CD8-positive, alpha-beta memory T cell (primary cell): ENCODE measurements at regions of chr20 and their contacts with region 1.

Region 1: GRCh38 chr20:64038565-64039292 is 2.7 kb downstream of the C20orf204 start:
- DNase-seq: peak; percentile 63 to 82 (median 66)
- H3K4me3 ChIP-seq: peak overlapping the region; percentile 49
- H3K4me3 Mint-ChIP-seq: peak overlapping the region; percentile 48 to 82 (median 59)
- H3K27ac ChIP-seq: no peak overlapping the region
- H3K27ac Mint-ChIP-seq: peak overlapping the region in 1 of 8 donors; percentile 84
- H3K4me1 ChIP-seq: peaks cover 64% of the 10 kb centered on the region
- H3K4me1 Mint-ChIP-seq: peaks cover 24 to 78% (median 33%) of the 10 kb centered on the region in 3 donors
- H3K27me3 ChIP-seq: no peaks in the 10 kb centered on the region
- H3K27me3 Mint-ChIP-seq: peaks cover 0 to 6% of the 10 kb centered on the region in 2 donors

Region 2: DNA sequence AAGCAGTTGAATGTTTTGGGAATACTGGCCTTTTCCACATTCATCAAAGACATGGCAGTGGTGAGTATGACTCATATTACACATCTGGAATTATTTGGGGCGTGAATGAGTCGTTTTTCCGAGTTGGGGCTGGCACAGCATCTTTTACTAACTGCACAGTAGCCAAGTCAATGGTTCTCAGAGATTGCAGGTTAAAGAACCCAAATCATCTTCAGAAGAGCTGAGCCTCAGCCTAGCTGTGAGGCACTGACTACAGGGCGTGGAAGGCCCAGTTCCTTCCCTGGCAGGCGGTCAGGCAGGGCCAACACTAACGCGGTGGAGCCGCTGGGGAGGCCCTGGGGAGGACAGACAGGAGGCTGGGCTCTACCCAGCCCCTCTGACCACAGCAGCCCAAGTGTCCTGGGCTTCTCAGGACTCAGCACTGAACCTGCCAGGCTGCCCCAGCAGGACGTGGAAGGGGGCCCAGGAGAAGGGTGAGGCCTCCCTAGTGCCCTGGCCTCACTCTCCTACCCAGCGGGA is 444.6 kb before region 1 on chr20:
- CTCF ChIA-PET with region 1: no interaction called
- POLR2A ChIA-PET with region 1: no interaction called
- DNase-seq: no peak
- H3K4me3 ChIP-seq: no peak overlapping the region
- H3K4me3 Mint-ChIP-seq: no peak overlapping the region
- H3K27ac ChIP-seq: no peak overlapping the region
- H3K27ac Mint-ChIP-seq: no peak overlapping the region
- H3K4me1 ChIP-seq: no peaks in the 10 kb centered on the region
- H3K4me1 Mint-ChIP-seq: no peaks in the 10 kb centered on the region
- H3K27me3 ChIP-seq: no peaks in the 10 kb centered on the region
- H3K27me3 Mint-ChIP-seq: no peaks in the 10 kb centered on the region

Region 3: GRCh38 chr20:63980806-63981728 is 57.7 kb before region 1 on chr20 and contains the start of gene PRPF6:
- CTCF ChIA-PET with region 1: interaction called, 57 read pairs
- POLR2A ChIA-PET with region 1: interaction called, 15 read pairs
- DNase-seq: peak; percentile 92 to 96 (median 93)
- H3K4me3 ChIP-seq: peak within 1 kb of the TSS; percentile 93
- H3K4me3 Mint-ChIP-seq: peak within 1 kb of the TSS; percentile 89 to 95 (median 92)
- H3K27ac ChIP-seq: peak within 1 kb of the TSS; percentile 90
- H3K27ac Mint-ChIP-seq: peak within 1 kb of the TSS; percentile 93 to 99 (median 96)
- H3K4me1 ChIP-seq: peaks cover 54% of the 10 kb centered on the region
- H3K4me1 Mint-ChIP-seq: peaks cover 58 to 71% (median 68%) of the 10 kb centered on the region in 3 donors
- H3K27me3 ChIP-seq: no peaks in the 10 kb centered on the region
- H3K27me3 Mint-ChIP-seq: no peaks in the 10 kb centered on the region
- total RNA-seq, gene PRPF6: 76.2 to 78.3 TPM

Region 4: GRCh38 chr20:64009811-64010387 is 28.8 kb before region 1 on chr20:
- CTCF ChIA-PET with region 1: interaction called, 11 read pairs
- POLR2A ChIA-PET with region 1: no interaction called
- DNase-seq: no peak
- H3K4me3 ChIP-seq: no peak overlapping the region
- H3K4me3 Mint-ChIP-seq: peak overlapping the region in 3 of 7 donors; percentile 7 to 19 (median 12)
- H3K27ac ChIP-seq: no peak overlapping the region
- H3K27ac Mint-ChIP-seq: peak overlapping the region in 3 of 8 donors; percentile 8 to 92 (median 66)
- H3K4me1 ChIP-seq: peaks cover 39% of the 10 kb centered on the region
- H3K4me1 Mint-ChIP-seq: peaks cover 25 to 47% (median 40%) of the 10 kb centered on the region in 3 donors
- H3K27me3 ChIP-seq: no peaks in the 10 kb centered on the region
- H3K27me3 Mint-ChIP-seq: no peaks in the 10 kb centered on the region

Region 5: DNA sequence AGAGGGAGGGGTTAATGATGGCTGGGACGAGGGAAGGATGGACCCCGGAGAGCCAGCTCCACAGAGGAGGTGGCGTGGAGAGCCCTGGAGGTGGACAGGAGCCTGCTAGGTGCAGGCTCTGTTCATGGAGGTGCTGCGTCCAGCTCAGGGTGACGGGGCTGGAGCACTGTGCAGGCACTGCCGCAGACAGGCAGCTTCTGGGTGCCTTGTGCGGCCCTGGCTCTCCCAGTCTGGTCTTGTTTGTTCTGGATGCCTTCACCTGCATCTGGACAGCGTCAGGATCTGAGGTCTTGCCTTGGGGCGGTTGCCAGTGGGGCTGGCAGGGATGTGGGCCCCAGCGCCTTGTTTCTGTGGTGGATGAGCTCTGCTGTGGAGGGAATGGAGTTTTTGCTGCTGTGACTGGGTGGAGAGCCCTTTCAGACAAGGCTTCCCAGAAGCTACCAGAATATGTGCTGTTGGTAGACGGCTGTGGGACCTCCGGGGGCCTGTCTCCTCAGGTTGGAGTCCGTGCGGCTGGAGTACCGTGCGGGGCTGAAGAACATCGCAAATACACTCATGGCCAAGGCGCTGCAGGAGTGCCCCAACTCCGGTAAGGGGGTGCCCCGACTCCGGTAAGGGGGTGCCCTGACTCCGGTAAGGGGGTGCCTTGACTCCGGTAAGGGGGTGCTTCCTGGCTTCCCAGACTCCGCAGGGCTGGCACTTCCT is 10.6 kb before region 1 on chr20:
- CTCF ChIA-PET with region 1: interaction called, 19 read pairs
- POLR2A ChIA-PET with region 1: interaction called, 4 read pairs
- DNase-seq: no peak
- H3K4me3 ChIP-seq: no peak overlapping the region
- H3K4me3 Mint-ChIP-seq: no peak overlapping the region
- H3K27ac ChIP-seq: no peak overlapping the region
- H3K27ac Mint-ChIP-seq: peak overlapping the region in 1 of 8 donors; percentile 17
- H3K4me1 ChIP-seq: no peaks in the 10 kb centered on the region
- H3K4me1 Mint-ChIP-seq: no peaks in the 10 kb centered on the region
- H3K27me3 ChIP-seq: no peaks in the 10 kb centered on the region
- H3K27me3 Mint-ChIP-seq: no peaks in the 10 kb centered on the region

Region 6: GRCh38 chr20:64062596-64063388 is 24.1 kb after region 1 on chr20 and contains the start of gene TCEA2:
- CTCF ChIA-PET with region 1: interaction called, 33 read pairs
- POLR2A ChIA-PET with region 1: no interaction called
- DNase-seq: peak; percentile 85 to 94 (median 87)
- H3K4me3 ChIP-seq: peak within 1 kb of the TSS; percentile 50
- H3K4me3 Mint-ChIP-seq: peak within 1 kb of the TSS; percentile 82 to 89 (median 86)
- H3K27ac ChIP-seq: peak within 1 kb of the TSS; percentile 51
- H3K27ac Mint-ChIP-seq: peak within 1 kb of the TSS in 7 of 8 donors; percentile 49 to 92 (median 68)
- H3K4me1 ChIP-seq: peaks cover 45% of the 10 kb centered on the region
- H3K4me1 Mint-ChIP-seq: peaks cover 24 to 53% (median 28%) of the 10 kb centered on the region in 3 donors
- H3K27me3 ChIP-seq: no peaks in the 10 kb centered on the region
- H3K27me3 Mint-ChIP-seq: no peaks in the 10 kb centered on the region
- total RNA-seq, gene TCEA2: 24.2 to 24.5 TPM

Region 7: GRCh38 chr20:64079273-64080012 is 40.7 kb after region 1 on chr20 and contains the start of gene RGS19:
- CTCF ChIA-PET with region 1: interaction called, 34 read pairs
- POLR2A ChIA-PET with region 1: interaction called, 5 read pairs
- DNase-seq: peak; percentile 61 to 80 (median 65)
- H3K4me3 ChIP-seq: peak within 1 kb of the TSS; percentile 81
- H3K4me3 Mint-ChIP-seq: peak within 1 kb of the TSS; percentile 83 to 93 (median 89)
- H3K27ac ChIP-seq: peak within 1 kb of the TSS; percentile 81
- H3K27ac Mint-ChIP-seq: peak within 1 kb of the TSS; percentile 84 to 95 (median 90)
- H3K4me1 ChIP-seq: peaks cover 36% of the 10 kb centered on the region
- H3K4me1 Mint-ChIP-seq: peaks cover 16 to 64% (median 30%) of the 10 kb centered on the region in 3 donors
- H3K27me3 ChIP-seq: no peaks in the 10 kb centered on the region
- H3K27me3 Mint-ChIP-seq: peaks cover 2 to 3% of the 10 kb centered on the region in 2 donors
- total RNA-seq, gene RGS19: 35.3 to 36.9 TPM

Region 8: GRCh38 chr20:64119681-64120341 is 81.1 kb after region 1 on chr20:
- CTCF ChIA-PET with region 1: interaction called, 41 read pairs
- POLR2A ChIA-PET with region 1: interaction called, 6 read pairs
- DNase-seq: no peak
- H3K4me3 ChIP-seq: peak overlapping the region; percentile 43
- H3K4me3 Mint-ChIP-seq: peak overlapping the region; percentile 47 to 74 (median 70)
- H3K27ac ChIP-seq: no peak overlapping the region
- H3K27ac Mint-ChIP-seq: peak overlapping the region in 5 of 8 donors; percentile 9 to 78 (median 44)
- H3K4me1 ChIP-seq: peaks cover 11% of the 10 kb centered on the region
- H3K4me1 Mint-ChIP-seq: peaks cover 6 to 10% (median 7%) of the 10 kb centered on the region in 3 donors
- H3K27me3 ChIP-seq: no peaks in the 10 kb centered on the region
- H3K27me3 Mint-ChIP-seq: peaks cover 8 to 23% of the 10 kb centered on the region in 2 donors